ENCODE measurements at regions of chrX and their contacts with region 1.

Region 1: GRCh38 chrX:119468930-119469635 is 839 bp downstream of the SLC25A5 start:
- DNase-seq: peak; percentile 90
- H3K4me3 ChIP-seq: peak overlapping the region; percentile 62
- H3K27ac ChIP-seq: peak overlapping the region; percentile 90
- H3K4me1 ChIP-seq: no peaks in the 10 kb centered on the region
- H3K27me3 ChIP-seq: no peaks in the 10 kb centered on the region
- CTCF ChIP-seq: peak; percentile 53

Region 2: DNA sequence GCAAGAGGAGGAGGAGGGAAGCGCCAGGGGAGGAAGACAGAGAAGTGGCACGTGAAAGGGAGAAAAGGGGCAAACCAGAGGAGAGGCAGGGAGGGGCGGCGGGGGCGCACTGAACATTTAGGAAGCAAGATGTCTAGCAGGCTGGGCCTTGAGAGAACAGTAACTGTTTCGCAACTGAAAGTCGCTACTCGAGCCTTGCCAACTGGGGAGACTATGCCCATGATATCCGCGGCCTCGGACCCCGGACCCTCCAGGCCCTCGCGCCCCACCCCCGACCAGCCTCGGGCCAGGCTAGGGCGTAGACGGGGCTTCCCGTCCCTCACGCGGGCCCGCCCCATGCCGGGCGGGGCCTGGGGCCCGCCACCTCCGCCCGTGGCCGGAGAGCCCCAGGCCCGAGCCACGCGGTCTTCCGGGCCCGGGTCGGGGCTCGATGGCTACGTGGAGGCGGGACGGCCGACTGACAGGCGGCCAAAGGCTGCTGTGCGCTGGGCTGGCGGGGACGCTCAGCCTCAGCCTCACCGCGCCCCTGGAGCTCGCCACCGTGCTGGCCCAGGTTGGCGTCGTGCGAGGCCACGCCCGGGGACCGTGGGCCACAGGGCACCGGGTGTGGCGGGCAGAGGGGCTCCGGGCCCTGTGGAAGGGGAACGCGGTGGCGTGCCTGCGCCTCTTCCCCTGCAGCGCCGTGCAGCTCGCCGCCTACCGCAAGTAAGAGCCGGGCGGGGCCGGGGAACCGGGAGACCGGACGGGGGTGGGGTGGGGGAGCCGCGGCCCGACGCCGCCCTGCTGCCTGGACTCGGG is 69.9 kb before region 1 on chrX and contains the start of gene SLC25A43:
- intact Hi-C with region 1: loop called (anchors 5 kb)
- DNase-seq: peak; percentile 64
- H3K4me3 ChIP-seq: peak within 1 kb of the TSS; percentile 48
- H3K27ac ChIP-seq: peak within 1 kb of the TSS; percentile 78
- H3K4me1 ChIP-seq: no peaks in the 10 kb centered on the region
- H3K27me3 ChIP-seq: no peaks in the 10 kb centered on the region
- CTCF ChIP-seq: no peak
- total RNA-seq, gene SLC25A43: 19.1 to 26.8 TPM